Natural killer cell (primary cell): ENCODE measurements at regions of chr7 and their contacts with region 1.

Region 1: DNA sequence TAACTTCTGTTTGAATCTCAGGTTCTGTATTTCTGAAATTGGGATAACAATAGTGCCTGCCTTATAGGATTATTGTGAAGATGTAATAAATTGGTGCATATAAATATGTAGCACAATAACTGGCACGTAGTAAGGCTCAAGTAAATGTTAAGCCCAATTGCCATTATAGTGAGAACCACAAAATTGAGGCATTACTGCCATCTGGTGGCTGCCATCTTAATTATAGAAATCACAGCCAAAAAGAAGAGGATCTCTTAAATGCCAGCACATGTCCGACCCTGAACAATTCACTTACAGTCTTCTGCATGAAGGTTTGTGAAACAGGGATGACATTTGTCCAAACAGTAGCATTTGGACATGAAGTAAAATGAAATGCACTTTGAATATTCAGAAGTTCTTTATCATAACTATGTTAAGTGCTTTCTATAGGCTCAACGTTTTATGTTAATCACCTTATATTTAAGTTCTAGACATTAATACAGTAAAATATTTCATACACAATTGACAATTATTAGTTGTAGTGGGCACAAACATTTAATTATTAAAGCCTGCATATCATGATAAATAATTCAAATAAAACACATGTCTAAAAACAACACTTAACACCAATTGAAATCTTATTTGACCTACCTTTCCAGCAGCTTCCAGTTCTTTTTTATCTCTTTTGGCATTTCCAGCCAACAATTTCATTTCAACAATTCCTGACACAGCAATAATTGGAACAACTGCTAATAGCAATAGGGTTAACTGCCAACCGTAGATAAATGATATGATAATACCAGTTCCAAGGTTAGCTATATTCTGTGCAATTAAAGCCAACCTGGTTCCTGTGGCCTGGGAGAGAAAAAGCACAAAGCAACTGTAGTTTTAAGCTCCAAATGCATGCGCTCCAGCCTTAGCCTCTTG is 58.5 kb downstream of the ABCB4 start:
- DNase-seq: peak; percentile 39 to 85
- ATAC-seq: peak; percentile 63 to 80 (median 76)
- H3K4me3 ChIP-seq: no peak overlapping the region
- H3K4me3 Mint-ChIP-seq: no peak overlapping the region
- H3K27ac ChIP-seq: no peak overlapping the region
- H3K27ac Mint-ChIP-seq: no peak overlapping the region
- H3K4me1 ChIP-seq: no peaks in the 10 kb centered on the region
- H3K4me1 Mint-ChIP-seq: no peaks in the 10 kb centered on the region
- H3K27me3 ChIP-seq: no peaks in the 10 kb centered on the region
- H3K27me3 Mint-ChIP-seq: peaks cover 0 to 7% of the 10 kb centered on the region in 2 donors
- CTCF ChIP-seq: peak; percentile 84

Region 2: DNA sequence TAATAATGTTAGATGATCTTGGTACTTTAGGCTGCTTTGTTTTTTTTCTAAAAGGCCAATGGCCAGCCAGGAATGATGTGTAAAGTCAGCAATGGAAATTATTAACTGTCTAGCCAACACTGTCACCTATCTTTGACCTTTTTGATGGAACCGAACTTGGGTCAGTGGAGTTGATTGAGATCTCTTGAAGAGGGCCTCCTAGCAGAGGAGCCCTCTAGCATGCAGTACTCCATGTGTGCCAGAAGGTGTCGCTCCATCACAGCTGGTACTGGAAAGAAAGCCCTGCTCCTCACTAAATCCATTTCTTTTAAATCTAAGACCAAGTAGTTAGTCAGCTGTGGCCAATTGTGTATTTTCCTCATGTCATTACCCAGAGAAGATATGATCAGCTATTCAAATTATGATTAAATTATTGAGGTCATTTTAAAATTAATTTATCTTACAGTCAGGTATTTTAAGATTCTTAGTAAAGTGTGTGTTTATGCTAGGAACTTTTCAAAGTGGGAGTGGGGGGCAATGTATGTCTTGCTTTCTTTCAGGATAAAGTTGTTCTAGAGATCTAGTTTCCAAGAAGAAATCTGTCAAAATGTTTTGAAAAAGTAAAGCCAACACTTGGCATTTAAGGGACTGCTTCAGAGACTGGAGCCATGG is 104.6 kb before region 1 on chr7:
- intact Hi-C with region 1: loop called (anchors 1 kb)
- DNase-seq: peak; percentile 48 to 85
- ATAC-seq: peak; percentile 90 to 100 (median 99)
- H3K4me3 ChIP-seq: no peak overlapping the region
- H3K4me3 Mint-ChIP-seq: no peak overlapping the region
- H3K27ac ChIP-seq: no peak overlapping the region
- H3K27ac Mint-ChIP-seq: no peak overlapping the region
- H3K4me1 ChIP-seq: no peaks in the 10 kb centered on the region
- H3K4me1 Mint-ChIP-seq: no peaks in the 10 kb centered on the region
- H3K27me3 ChIP-seq: no peaks in the 10 kb centered on the region
- H3K27me3 Mint-ChIP-seq: peaks cover 2 to 8% of the 10 kb centered on the region in 2 donors
- CTCF ChIP-seq: peak; percentile 99

Region 3: GRCh38 chr7:87445897-87446296 is 29.0 kb after region 1 on chr7:
- intact Hi-C with region 1: no loop called
- DNase-seq: no peak
- ATAC-seq: no peak
- H3K4me3 ChIP-seq: no peak overlapping the region
- H3K4me3 Mint-ChIP-seq: no peak overlapping the region
- H3K27ac ChIP-seq: no peak overlapping the region
- H3K27ac Mint-ChIP-seq: no peak overlapping the region
- H3K4me1 ChIP-seq: no peaks in the 10 kb centered on the region
- H3K4me1 Mint-ChIP-seq: peaks cover 0 to 5% of the 10 kb centered on the region in 2 donors
- H3K27me3 ChIP-seq: no peaks in the 10 kb centered on the region
- H3K27me3 Mint-ChIP-seq: peaks cover 5 to 6% of the 10 kb centered on the region in 2 donors
- CTCF ChIP-seq: no peak

Region 4: GRCh38 chr7:87702313-87702712 is 285.4 kb after region 1 on chr7:
- intact Hi-C with region 1: no loop called
- DNase-seq: no peak
- ATAC-seq: no peak
- H3K4me3 ChIP-seq: no peak overlapping the region
- H3K4me3 Mint-ChIP-seq: no peak overlapping the region
- H3K27ac ChIP-seq: no peak overlapping the region
- H3K27ac Mint-ChIP-seq: no peak overlapping the region
- H3K4me1 ChIP-seq: no peaks in the 10 kb centered on the region
- H3K4me1 Mint-ChIP-seq: no peaks in the 10 kb centered on the region
- H3K27me3 ChIP-seq: no peaks in the 10 kb centered on the region
- H3K27me3 Mint-ChIP-seq: peaks cover 0 to 2% of the 10 kb centered on the region in 2 donors
- CTCF ChIP-seq: no peak